Activated CD8-positive, alpha-beta T cell treated with anti-CD3 and anti-CD28 coated beads, Interleukin-2, amount 10 ng/mL, durations not matched to agents 7 days and 5 days (primary cell): ENCODE measurements at regions of chr5 and their contacts with region 1.

Region 1: GRCh38 chr5:93607367-93608258 is 24.6 kb downstream of the NR2F1 start:
- DNase-seq: peak; percentile 53
- ATAC-seq: peak; percentile 78
- H3K4me3 Mint-ChIP-seq: no peak overlapping the region
- H3K27ac Mint-ChIP-seq: no peak overlapping the region
- H3K4me1 Mint-ChIP-seq: peaks cover 10% of the 10 kb centered on the region
- H3K27me3 Mint-ChIP-seq: peaks cover 73% of the 10 kb centered on the region

Region 2: GRCh38 chr5:93428868-93429267 is 178.7 kb before region 1 on chr5:
- CTCF ChIA-PET with region 1: no interaction called
- POLR2A ChIA-PET with region 1: no interaction called
- DNase-seq: no peak
- ATAC-seq: no peak
- H3K4me3 Mint-ChIP-seq: no peak overlapping the region
- H3K27ac Mint-ChIP-seq: no peak overlapping the region
- H3K4me1 Mint-ChIP-seq: no peaks in the 10 kb centered on the region
- H3K27me3 Mint-ChIP-seq: peaks cover 2% of the 10 kb centered on the region

Region 3: DNA sequence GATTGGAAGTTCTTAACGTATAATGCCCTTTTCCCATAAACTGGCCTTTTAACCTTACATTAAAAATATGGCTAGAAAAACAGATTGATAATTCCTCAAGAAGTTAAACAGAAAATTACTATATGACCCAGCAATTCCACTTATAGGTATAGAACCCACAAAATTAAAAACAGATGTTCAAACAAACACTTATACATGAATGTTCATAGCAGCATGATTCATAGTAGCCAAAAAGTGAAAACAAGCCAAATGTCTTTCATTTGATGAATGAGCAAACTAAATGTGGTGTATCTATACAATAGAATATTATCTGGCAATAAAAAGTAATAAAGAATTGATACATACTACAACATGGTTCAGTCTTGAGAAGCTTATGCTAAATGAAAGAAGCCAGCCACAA is 98.3 kb after region 1 on chr5:
- CTCF ChIA-PET with region 1: no interaction called
- POLR2A ChIA-PET with region 1: no interaction called
- DNase-seq: no peak
- ATAC-seq: no peak
- H3K4me3 Mint-ChIP-seq: no peak overlapping the region
- H3K27ac Mint-ChIP-seq: no peak overlapping the region
- H3K4me1 Mint-ChIP-seq: no peaks in the 10 kb centered on the region
- H3K27me3 Mint-ChIP-seq: no peaks in the 10 kb centered on the region

Region 4: GRCh38 chr5:93800988-93801811 is 193.6 kb after region 1 on chr5:
- CTCF ChIA-PET with region 1: interaction called, 47 read pairs
- POLR2A ChIA-PET with region 1: no interaction called
- DNase-seq: peak; percentile 37
- ATAC-seq: no peak
- H3K4me3 Mint-ChIP-seq: no peak overlapping the region
- H3K27ac Mint-ChIP-seq: no peak overlapping the region
- H3K4me1 Mint-ChIP-seq: peaks cover 3% of the 10 kb centered on the region
- H3K27me3 Mint-ChIP-seq: no peaks in the 10 kb centered on the region